ENCODE measurements at regions of chr4 and their contacts with region 1.

Region 1: GRCh38 chr4:183838987-183839712 is 66.0 kb upstream of the STOX2 start:
- DNase-seq: no peak
- CTCF ChIP-seq: no peak

Region 2: DNA sequence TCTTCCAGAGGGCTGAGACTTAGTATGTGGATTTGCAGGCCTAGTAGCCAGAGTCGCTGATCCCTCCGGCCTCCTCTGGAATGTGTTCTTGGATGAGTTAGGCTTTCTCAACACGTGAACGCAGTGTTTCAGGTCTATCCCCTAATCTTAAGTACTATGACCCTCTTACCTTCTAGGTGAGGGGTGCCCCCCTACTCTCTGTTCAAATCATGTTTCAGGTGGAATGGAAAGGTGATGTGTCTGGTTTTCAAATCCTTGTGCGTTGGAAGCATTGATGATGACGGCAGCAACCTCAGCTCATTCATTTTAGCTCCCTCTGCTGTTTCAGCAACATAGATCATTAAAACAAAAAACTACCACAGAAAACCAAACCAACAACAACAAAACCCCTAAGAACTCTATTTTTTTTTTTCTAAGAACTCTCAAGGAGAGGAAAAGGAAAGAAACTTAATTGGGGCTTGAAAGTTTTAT is 236.6 kb before region 1 on chr4:
- in situ Hi-C with region 1: no loop called
- DNase-seq: no peak
- CTCF ChIP-seq: no peak

Region 3: GRCh38 chr4:184080674-184081073 is 241.5 kb after region 1 on chr4:
- in situ Hi-C with region 1: no loop called
- DNase-seq: no peak
- CTCF ChIP-seq: no peak

Region 4: GRCh38 chr4:184097241-184097605 is 258.1 kb after region 1 on chr4:
- in situ Hi-C with region 1: loop called (anchors 10 kb)
- DNase-seq: peak; percentile 45
- CTCF ChIP-seq: peak; percentile 17

Region 5: GRCh38 chr4:184171011-184171410 is 331.9 kb after region 1 on chr4:
- in situ Hi-C with region 1: loop called (anchors 10 kb)
- DNase-seq: no peak
- CTCF ChIP-seq: no peak